ENCODE measurements at regions of chr5 and their contacts with region 1.

Region 1: GRCh38 chr5:123511648-123512605 is at the start of gene CSNK1G3:
- DNase-seq: peak; percentile 81 to 97 (median 95)
- H3K4me3 ChIP-seq: peak within 1 kb of the TSS; percentile 65 to 96 (median 82)
- H3K27ac ChIP-seq: peak within 1 kb of the TSS; percentile 12 to 96 (median 87)
- H3K27me3 ChIP-seq: no peaks in the 10 kb centered on the region
- CTCF ChIP-seq: peak in 29 of 56 donors; percentile 6 to 50 (median 25)
- total RNA-seq, gene CSNK1G3: 34.3 to 70.8 (median 53.0) TPM

Region 2: DNA sequence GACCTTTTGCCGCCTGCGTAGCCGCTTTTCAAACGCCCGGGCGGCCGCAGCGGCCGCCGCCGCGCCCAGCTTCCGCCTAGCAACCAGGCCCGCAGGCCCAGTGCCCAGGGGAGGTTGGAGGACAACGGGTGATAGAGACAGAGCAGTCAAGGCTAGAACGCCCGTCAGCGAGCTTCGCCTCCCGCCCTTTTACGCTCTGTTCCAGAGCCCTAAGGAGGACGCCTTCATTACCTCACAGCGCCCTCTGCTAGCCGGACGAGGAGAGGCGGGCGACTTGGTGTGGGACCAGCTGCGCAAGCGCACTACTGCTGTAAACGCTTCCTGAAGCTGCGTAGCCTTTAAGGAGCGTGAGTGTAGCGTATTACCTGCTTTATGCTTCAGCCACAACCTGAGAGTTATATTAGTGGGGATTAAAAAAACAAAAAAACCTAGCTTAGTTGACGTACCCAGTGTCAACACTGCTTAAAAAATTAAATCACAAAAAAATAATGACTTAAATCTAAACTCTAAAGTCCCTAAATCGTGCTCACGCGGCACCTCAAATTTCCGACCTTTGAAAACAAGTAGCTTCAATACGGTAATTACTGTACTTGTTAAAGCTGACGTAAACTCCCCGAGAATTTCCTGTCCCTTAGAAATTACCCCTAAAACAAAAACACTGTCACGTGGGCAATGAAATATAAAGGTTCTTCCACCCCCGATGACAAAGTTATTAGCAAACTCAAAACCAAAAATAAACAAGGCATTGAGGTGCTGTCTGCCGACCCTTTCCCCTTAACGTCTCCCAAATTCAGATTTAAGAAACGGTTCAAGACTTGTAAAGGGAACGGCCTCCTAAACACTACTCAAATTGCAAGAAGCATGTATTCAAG is 88.4 kb before region 1 on chr5 and contains the start of gene CEP120:
- intact Hi-C with region 1: loop called (anchors 1 kb)
- DNase-seq: peak; percentile 94 to 99 (median 98)
- H3K4me3 ChIP-seq: peak within 1 kb of the TSS; percentile 58 to 97 (median 85)
- H3K27ac ChIP-seq: peak within 1 kb of the TSS in 58 of 59 donors; percentile 18 to 96 (median 85)
- H3K27me3 ChIP-seq: no peaks in the 10 kb centered on the region
- CTCF ChIP-seq: peak; percentile 28 to 96 (median 83)
- total RNA-seq, gene CEP120: 11.8 to 32.6 (median 21.2) TPM

Region 3: GRCh38 chr5:123605822-123606221 is 93.9 kb after region 1 on chr5:
- intact Hi-C with region 1: loop called in 1 of 2 experiments (anchors 10 kb)
- DNase-seq: no peak
- H3K4me3 ChIP-seq: no peak overlapping the region
- H3K27ac ChIP-seq: no peak overlapping the region
- H3K27me3 ChIP-seq: no peaks in the 10 kb centered on the region
- CTCF ChIP-seq: no peak

Region 4: DNA sequence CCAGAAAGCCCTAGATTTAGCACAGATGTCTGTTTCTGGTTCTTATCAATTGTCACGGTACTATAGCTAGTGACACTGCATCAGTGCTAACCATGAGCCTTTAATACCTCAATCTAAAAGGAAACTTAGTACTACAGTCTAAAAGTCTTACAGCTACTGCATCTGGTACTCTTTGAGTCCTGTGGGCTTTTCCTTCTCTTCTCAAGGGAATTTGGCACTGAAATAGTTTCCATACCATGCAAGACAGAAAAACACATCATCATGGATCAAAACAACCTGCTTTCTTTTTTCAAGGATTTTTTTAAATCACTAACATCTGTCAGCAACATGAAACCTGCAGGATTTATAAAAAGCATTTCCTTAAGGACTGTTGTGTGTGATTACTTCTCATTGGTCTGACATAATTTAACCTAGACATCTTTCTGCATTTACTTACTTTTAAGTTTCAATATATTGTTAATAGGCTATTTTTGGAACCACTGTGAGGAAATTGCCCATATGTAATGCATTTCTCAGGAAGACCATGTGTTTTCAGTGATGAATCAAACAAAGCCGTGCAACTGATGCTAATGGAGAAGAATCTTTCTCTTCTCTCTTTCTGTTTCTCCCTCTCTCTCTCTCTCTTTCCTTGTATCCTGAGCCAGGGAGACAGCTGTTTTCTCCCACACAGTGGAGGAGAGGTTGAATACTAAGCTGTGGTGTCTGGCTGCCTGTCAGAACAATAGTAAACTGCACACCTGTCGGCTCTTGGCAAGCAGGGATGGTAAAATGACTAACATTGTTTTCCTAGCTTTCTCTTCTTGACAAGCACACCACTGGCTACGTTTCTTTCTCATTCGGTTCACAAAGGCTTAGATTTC is 273.5 kb after region 1 on chr5:
- intact Hi-C with region 1: no loop called
- DNase-seq: peak in 2 of 10 donors; percentile 14 to 43
- H3K4me3 ChIP-seq: peak overlapping the region in 43 of 59 donors; percentile 1 to 58 (median 30)
- H3K27ac ChIP-seq: peak overlapping the region in 11 of 59 donors; percentile 7 to 45 (median 21)
- H3K27me3 ChIP-seq: no peaks in the 10 kb centered on the region
- CTCF ChIP-seq: no peak

Region 5: DNA sequence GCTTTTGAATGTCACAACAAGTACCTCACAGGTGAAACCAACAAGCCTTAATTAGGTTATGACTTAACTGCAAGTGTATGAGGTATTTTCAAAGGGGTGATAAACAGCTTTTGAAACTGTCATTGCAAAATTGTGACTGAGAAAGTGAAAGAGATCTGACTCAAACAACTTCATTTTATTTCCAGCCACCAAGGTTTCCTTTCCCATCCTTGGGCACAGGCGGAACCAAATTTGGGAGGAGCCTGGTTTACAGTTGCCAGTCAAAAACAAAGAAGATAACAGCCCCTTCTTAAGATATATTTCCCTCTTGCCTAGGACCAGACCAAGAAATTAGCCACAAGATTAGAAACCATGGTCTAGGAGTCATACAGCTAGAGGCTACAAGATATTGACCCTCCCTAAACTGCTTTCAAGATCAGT is 417.1 kb after region 1 on chr5:
- intact Hi-C with region 1: no loop called
- DNase-seq: no peak
- H3K4me3 ChIP-seq: no peak overlapping the region
- H3K27ac ChIP-seq: no peak overlapping the region
- H3K27me3 ChIP-seq: no peaks in the 10 kb centered on the region
- CTCF ChIP-seq: no peak